ENCODE measurements at regions of chr10 and their contacts with region 1.

Region 1: GRCh38 chr10:80662577-80663261 is 125.0 kb downstream of the SH2D4B start:
- DNase-seq: peak; percentile 73
- CTCF ChIP-seq: peak; percentile 98

Region 2: DNA sequence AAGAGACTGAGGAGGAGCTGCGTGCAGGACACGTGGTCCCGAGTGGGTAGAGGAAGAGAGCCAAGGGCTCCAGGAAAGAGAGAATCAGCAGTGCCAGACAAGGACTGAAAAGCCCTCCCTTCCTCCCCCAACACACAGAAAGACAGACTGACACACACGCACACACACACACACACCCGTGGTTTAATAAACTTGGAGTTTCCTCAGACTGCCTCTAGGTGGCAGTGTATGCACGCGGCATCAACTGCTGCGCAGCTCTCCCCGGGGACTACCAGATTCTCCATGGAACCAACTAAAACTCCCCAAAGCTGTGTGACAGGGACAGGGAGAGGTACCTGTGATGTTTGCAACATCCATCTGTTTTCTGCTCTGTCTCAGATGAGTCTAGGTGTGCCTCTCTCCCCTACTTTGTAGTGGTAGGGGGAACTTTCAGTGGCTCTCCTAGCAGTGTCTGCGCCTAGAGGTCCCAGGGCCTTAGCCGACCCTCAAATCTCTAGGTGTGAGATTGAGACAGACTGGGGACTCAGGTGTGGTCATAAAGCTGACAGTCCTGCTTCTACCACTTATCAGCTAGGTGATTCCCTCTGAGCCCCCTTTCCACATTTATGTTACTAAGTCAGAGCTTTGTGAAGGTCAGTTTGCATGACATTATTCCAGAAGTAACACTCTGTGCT is 217.9 kb before region 1 on chr10:
- CTCF ChIA-PET with region 1: interaction called, 14 read pairs
- POLR2A ChIA-PET with region 1: no interaction called
- DNase-seq: peak; percentile 76
- CTCF ChIP-seq: peak; percentile 81

Region 3: DNA sequence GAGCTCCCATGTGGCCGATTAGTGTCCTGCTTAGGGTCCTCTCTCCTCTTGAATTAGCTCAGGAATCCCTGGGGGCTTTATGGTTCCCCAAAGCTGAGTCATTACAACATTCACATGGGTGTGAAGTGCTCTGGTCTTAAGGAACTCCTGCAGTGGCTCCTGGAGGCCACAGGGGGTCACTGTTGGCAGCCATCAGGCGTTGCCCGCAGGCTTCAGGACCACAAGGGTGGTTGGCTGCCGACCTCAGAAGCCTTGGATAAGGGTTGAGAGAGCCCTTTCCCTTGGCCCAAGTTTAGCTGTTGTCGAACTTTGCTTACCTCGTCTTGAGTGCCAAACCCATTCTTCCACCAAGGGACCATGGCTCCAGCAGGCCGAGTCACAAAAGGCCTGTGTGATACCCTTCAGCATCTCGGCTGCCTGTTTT is 63.3 kb before region 1 on chr10:
- CTCF ChIA-PET with region 1: interaction called, 41 read pairs
- POLR2A ChIA-PET with region 1: no interaction called
- DNase-seq: peak; percentile 76
- CTCF ChIP-seq: peak; percentile 85

Region 4: GRCh38 chr10:80649183-80649582 is 13.5 kb before region 1 on chr10:
- CTCF ChIA-PET with region 1: interaction called, 93 read pairs
- POLR2A ChIA-PET with region 1: no interaction called
- DNase-seq: no peak
- CTCF ChIP-seq: no peak

Region 5: DNA sequence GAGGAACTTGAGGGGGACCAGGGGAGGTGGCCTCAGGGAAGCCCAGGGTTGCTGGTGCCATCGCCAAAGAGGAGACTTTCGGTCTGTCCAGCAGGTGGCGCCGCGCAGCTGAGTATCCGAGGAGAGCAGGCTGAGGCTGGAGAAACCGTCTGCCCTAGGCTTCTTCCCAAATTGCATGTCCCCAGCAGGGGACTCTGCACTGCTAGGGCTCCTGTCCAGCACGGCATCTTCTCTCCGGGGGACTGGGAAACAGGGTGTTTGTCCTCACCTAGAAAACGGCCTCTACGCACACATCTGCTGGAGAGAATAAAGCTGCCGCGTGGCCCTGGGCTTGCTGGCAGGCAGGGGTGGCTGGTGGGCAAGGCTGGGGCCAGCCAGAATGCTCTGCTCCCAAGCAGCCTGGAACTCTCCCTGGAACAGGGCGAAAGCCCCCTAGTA is 36.9 kb after region 1 on chr10:
- CTCF ChIA-PET with region 1: interaction called, 24 read pairs
- POLR2A ChIA-PET with region 1: no interaction called
- DNase-seq: peak; percentile 81
- CTCF ChIP-seq: peak; percentile 97

Region 6: GRCh38 chr10:80739963-80740715 is 77.4 kb after region 1 on chr10:
- CTCF ChIA-PET with region 1: no interaction called
- POLR2A ChIA-PET with region 1: no interaction called
- DNase-seq: no peak
- CTCF ChIP-seq: no peak

Region 7: GRCh38 chr10:80856186-80856585 is 193.5 kb after region 1 on chr10:
- CTCF ChIA-PET with region 1: no interaction called
- POLR2A ChIA-PET with region 1: no interaction called
- DNase-seq: no peak
- CTCF ChIP-seq: no peak

Region 8: GRCh38 chr10:80924063-80924952 is 261.6 kb after region 1 on chr10:
- CTCF ChIA-PET with region 1: interaction called, 28 read pairs
- POLR2A ChIA-PET with region 1: no interaction called
- DNase-seq: no peak
- CTCF ChIP-seq: peak; percentile 49

Region 9: GRCh38 chr10:81018708-81019365 is 356.1 kb after region 1 on chr10:
- CTCF ChIA-PET with region 1: interaction called, 26 read pairs
- POLR2A ChIA-PET with region 1: no interaction called
- DNase-seq: peak; percentile 43
- CTCF ChIP-seq: peak; percentile 79

Region 10: DNA sequence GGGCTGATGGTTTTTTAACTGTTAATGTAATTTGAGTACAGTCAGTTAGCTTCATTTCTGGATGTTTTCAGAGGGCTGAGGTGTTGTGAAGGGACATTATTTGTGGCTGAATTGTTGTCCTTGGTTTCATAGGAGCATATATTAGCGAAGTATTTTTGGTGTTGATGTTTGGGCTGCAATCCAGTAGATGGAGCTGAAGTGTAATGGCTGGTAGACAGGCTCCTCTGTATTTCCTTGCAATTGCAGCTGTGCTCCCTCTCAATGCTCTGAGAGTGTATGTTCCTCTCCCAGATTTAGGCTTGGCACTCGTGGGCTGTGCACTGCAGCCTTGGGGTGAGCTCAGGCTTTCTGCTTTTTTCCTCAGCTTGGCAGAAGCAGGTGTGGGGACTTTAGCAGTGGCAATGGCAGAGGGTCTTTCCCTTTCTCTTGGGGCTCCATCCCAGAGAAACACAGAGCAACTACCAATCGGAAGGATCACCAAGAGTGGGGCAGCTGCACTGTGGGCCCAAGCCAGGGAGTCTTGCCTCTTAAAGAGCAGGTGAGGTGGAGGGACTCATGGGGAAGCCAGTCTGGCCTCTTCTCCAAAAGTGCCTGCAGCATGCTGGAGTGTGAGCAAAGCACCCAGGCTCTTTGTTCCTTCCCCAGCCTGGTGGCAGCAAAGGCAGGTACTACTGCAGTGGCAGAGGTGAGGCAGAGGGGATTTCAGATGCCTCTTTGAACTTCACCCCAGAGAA is 419.3 kb after region 1 on chr10:
- CTCF ChIA-PET with region 1: no interaction called
- POLR2A ChIA-PET with region 1: no interaction called
- DNase-seq: peak; percentile 16
- CTCF ChIP-seq: peak; percentile 32

Measured in GM10248 (cell line).